Adrenal gland (tissue), 19 donors: ENCODE measurements at regions of chr1 and their contacts with region 1.

Region 1: DNA sequence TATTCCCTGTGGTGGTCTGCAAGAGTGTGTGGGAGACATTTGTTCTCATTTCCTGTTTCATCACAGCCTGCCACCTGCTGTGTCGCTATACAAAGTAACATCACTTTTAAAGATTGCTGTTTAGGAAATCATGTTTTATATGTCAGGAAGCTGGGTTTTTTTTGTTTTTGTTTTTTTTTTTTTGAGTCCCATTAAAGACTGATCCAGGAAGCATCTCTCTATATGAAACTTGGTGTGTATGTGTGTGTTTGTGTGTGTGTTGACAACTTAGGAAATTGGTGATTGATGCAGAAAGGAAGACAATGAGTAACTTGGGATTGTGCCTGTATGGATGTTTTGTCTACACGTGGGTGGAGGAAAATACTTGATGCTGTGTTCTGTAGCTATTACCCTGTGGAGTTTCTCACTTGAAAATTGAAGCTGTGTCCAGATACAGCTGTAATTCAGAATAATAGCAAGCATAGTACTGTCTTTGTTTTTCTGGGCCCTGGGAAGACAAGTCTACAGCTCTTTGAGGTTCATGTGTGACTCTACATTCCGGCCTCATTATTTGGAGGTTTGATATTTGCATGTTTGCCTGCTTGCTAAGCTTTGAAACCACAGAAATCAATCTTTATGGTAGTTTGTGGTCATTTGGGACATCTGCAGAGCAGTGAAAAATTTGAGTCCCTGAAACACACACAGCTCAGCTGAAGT is 47.9 kb downstream of the LAMC1 start:
- DNase-seq: no peak
- H3K4me3 ChIP-seq: no peak overlapping the region
- H3K27ac ChIP-seq: no peak overlapping the region
- H3K4me1 ChIP-seq: peaks cover 16 to 27% of the 10 kb centered on the region in 2 donors
- H3K27me3 ChIP-seq: no peaks in the 10 kb centered on the region
- CTCF ChIP-seq: no peak
- POLR2A ChIP-seq: no peak

Region 2: GRCh38 chr1:182955596-182956588 is 115.2 kb before region 1 on chr1:
- intact Hi-C with region 1: no loop called
- DNase-seq: peak in 1 of 7 donors; percentile 26
- H3K4me3 ChIP-seq: no peak overlapping the region
- H3K27ac ChIP-seq: no peak overlapping the region
- H3K4me1 ChIP-seq: peaks cover 0 to 5% of the 10 kb centered on the region in 2 donors
- H3K27me3 ChIP-seq: peaks cover 24% of the 10 kb centered on the region
- CTCF ChIP-seq: no peak
- POLR2A ChIP-seq: no peak

Region 3: GRCh38 chr1:183023601-183024316 is 47.3 kb before region 1 on chr1:
- intact Hi-C with region 1: loop called in 1 of 2 experiments (anchors 10 kb)
- DNase-seq: peak; percentile 56 to 83 (median 66)
- H3K4me3 ChIP-seq: peak overlapping the region in 3 of 4 donors; percentile 42 to 85 (median 57)
- H3K27ac ChIP-seq: peak overlapping the region; percentile 23 to 100 (median 100)
- H3K4me1 ChIP-seq: peaks cover 0 to 41% of the 10 kb centered on the region in 2 donors
- H3K27me3 ChIP-seq: no peaks in the 10 kb centered on the region
- CTCF ChIP-seq: peak in 5 of 6 experiments; percentile 40 to 60 (median 43)
- POLR2A ChIP-seq: peak in 1 of 2 donors; percentile 28

Region 4: GRCh38 chr1:183198463-183198862 is 127.4 kb after region 1 on chr1:
- intact Hi-C with region 1: no loop called
- DNase-seq: no peak
- H3K4me3 ChIP-seq: no peak overlapping the region
- H3K27ac ChIP-seq: no peak overlapping the region
- H3K4me1 ChIP-seq: no peaks in the 10 kb centered on the region
- H3K27me3 ChIP-seq: no peaks in the 10 kb centered on the region
- CTCF ChIP-seq: no peak
- POLR2A ChIP-seq: no peak